ENCODE measurements at regions of chr12 and their contacts with region 1.

Region 1: DNA sequence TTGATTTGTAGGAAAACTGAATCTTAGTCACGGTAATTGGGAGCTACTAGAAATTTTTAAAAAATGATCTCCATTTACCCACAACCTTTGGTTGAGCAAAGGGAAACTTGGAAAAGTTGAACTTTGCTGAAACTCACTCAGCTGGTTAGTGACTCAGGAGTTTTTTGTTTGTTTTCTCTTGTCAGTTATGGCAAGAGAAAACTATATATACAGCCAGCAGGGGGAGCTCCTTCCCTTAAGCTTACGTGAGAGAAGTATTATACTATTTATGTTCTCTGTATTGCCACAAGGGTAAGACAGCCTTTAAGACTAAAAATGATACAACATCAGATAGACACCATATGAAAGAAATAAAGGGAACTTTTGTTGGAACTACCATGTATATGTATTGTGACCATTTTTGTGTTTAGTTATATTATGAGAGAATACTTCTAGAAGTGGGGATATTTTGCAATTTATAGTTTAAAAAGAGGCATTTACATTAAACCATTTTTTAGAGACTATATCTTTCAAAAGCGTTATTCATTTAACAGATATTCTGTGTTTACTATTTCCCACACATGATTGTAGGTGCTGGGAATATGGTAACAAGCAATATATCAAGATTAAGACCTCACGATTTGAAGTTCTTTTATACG is 28.1 kb upstream of the TBC1D30 start:
- DNase-seq: peak; percentile 44
- H3K4me3 Mint-ChIP-seq: no peak overlapping the region
- H3K27ac Mint-ChIP-seq: no peak overlapping the region
- H3K4me1 Mint-ChIP-seq: no peaks in the 10 kb centered on the region
- H3K27me3 Mint-ChIP-seq: peaks cover 27% of the 10 kb centered on the region

Region 2: DNA sequence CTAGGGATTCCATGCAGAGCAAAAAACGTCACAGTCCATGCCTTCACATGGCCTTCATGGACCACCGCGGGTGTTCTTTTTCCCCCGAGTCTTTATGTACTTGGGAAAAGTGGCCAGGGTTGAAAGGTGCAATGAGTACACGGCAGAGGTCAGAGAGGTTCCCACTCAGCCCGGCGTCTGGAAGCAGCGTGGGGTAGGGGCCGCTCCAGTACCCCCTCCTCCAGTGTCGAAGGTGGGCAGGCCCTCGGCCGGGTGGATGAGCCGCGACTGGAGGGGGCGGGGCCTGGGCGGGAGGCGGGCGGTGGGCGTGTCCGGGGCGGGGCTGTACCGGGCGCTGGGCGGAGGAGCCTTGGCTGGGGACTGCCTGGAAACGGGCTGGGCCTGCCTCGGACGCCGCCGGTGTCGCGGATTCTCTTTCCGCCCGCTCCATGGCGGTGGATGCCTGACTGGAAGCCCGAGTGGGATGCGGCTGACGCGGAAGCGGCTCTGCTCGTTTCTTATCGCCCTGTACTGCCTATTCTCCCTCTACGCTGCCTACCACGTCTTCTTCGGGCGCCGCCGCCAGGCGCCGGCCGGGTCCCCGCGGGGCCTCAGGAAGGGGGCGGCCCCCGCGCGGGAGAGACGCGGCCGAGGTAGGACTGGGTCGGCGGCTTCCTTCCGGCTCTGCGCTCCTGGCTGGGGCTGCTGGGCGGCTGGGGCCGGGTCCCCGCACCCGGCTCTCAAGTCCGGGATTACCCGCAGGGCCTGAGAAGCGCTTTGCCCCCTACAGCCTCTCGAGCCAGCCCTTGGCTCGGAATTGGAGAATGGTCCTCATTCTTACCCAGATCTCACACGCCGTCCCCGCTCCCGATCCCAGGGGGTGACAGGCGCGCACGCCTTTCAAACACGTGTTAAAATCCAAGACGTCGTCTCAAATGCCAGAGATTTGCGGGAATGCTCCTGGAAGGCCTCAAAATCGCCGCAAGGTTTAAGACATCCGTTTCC is 1016.5 kb before region 1 on chr12 and contains the start of gene RXYLT1:
- intact Hi-C with region 1: no loop called
- DNase-seq: peak; percentile 75
- H3K4me3 Mint-ChIP-seq: peak within 1 kb of the TSS; percentile 95
- H3K27ac Mint-ChIP-seq: peak within 1 kb of the TSS; percentile 90
- H3K4me1 Mint-ChIP-seq: peaks cover 18% of the 10 kb centered on the region
- H3K27me3 Mint-ChIP-seq: no peaks in the 10 kb centered on the region
- total RNA-seq, gene RXYLT1: 26.5 and 27.3 TPM in 2 replicates

Region 3: GRCh38 chr12:65121049-65121955 is 325.0 kb after region 1 on chr12 and contains the start of gene WIF1:
- intact Hi-C with region 1: loop called (anchors 1 kb)
- DNase-seq: no peak
- H3K4me3 Mint-ChIP-seq: peak within 1 kb of the TSS; percentile 46
- H3K27ac Mint-ChIP-seq: no peak within 1 kb of the TSS
- H3K4me1 Mint-ChIP-seq: no peaks in the 10 kb centered on the region
- H3K27me3 Mint-ChIP-seq: peaks cover 30% of the 10 kb centered on the region
- total RNA-seq, gene WIF1: not detected in 2 replicates

Region 4: DNA sequence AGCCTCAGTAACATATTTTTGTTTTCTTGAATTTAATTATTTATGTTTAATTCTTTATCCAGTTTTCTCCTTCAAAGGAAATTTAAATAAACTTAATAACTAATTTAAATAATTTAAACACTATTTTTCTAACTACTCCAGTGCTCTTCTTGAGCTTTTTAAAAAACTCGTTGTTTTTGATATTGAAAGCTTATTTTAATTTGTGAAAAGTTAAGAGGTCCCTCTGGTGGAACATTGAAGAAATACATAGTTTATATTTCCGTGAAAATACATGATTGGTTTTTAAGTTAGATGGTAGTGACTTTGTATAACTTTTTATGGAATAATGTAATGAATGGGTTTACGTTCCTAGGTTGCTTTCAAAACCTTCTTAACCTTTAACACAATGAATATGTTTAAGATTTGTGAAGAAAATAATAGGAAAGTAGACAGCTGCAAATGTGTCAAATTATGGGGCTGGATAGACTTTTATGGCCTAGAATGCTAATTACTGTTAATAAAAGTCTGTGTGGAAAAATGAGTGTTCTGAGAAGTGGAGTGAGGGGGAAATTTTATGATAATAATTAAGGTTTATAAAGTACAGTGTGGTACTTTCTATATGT is 436.2 kb after region 1 on chr12:
- intact Hi-C with region 1: loop called (anchors 1 kb)
- DNase-seq: no peak
- H3K4me3 Mint-ChIP-seq: no peak overlapping the region
- H3K27ac Mint-ChIP-seq: no peak overlapping the region
- H3K4me1 Mint-ChIP-seq: peaks cover 15% of the 10 kb centered on the region
- H3K27me3 Mint-ChIP-seq: no peaks in the 10 kb centered on the region

Region 5: DNA sequence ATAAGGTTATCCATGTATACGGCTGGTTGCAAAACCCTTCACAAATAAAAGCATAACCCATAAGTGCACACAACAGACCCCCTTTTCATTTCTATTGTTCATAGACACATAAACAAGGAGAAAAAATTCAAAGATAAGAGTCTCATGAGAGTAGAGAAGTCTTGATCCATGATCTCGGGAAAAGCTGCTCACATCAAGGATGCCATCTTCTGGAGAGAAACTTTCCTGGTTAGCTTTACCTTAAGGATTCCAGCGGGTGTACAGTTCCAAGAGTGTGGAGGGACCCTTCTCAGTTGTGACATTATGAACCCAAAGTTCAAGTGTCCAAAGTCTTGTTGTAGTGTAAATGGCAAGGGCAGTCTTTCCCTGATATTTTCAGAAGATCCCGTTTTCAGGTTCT is 1189.7 kb after region 1 on chr12:
- intact Hi-C with region 1: loop called (anchors 5 kb)
- DNase-seq: no peak
- H3K4me3 Mint-ChIP-seq: no peak overlapping the region
- H3K27ac Mint-ChIP-seq: no peak overlapping the region
- H3K4me1 Mint-ChIP-seq: no peaks in the 10 kb centered on the region
- H3K27me3 Mint-ChIP-seq: peaks cover 10% of the 10 kb centered on the region